Left cardiac atrium (tissue), 4 donors: ENCODE measurements at regions of chr15 and their contacts with region 1.

Region 1: DNA sequence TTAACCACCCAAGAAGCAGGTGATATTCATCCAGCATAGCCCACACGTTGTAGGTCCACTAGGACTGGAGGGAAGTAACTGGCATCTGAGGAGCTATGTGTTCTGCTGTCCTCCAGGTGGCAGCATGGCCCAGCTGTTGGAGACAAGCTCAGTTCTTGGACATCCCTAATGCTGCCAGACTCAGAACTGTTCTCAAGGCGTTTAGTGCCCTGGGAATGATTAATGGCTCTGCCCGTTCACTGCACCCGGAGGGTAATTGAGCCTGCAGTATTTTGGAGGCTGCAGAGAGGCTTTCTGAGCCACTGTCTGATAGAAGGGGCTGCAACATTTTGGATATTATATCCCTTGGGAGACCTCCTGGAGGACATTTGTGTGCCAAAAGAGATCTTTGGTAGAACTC is 521.2 kb upstream of the SEMA6D start:
- DNase-seq: peak; percentile 83
- ATAC-seq: peak; percentile 98 to 99

Region 2: GRCh38 chr15:47116698-47117097 is 79.4 kb before region 1 on chr15:
- intact Hi-C with region 1: no loop called
- DNase-seq: no peak
- ATAC-seq: no peak

Region 3: GRCh38 chr15:47409600-47409999 is 213.5 kb after region 1 on chr15:
- intact Hi-C with region 1: loop called in 1 of 2 experiments (anchors 10 kb)
- DNase-seq: no peak
- ATAC-seq: peak in 1 of 2 donors; percentile 23

Region 4: GRCh38 chr15:47466351-47466750 is 270.3 kb after region 1 on chr15:
- intact Hi-C with region 1: loop called in 1 of 2 experiments (anchors 10 kb)
- DNase-seq: no peak
- ATAC-seq: no peak

Region 5: GRCh38 chr15:47987908-47988532 is 792.0 kb after region 1 on chr15:
- intact Hi-C with region 1: loop called (anchors 2 to 5 kb)
- DNase-seq: no peak
- ATAC-seq: peak; percentile 93 to 94

Region 6: GRCh38 chr15:48250640-48251076 is 1054.6 kb after region 1 on chr15:
- intact Hi-C with region 1: loop called in 1 of 2 experiments (anchors 10 kb)
- DNase-seq: peak; percentile 60
- ATAC-seq: peak in 1 of 2 donors; percentile 45

Region 7: DNA sequence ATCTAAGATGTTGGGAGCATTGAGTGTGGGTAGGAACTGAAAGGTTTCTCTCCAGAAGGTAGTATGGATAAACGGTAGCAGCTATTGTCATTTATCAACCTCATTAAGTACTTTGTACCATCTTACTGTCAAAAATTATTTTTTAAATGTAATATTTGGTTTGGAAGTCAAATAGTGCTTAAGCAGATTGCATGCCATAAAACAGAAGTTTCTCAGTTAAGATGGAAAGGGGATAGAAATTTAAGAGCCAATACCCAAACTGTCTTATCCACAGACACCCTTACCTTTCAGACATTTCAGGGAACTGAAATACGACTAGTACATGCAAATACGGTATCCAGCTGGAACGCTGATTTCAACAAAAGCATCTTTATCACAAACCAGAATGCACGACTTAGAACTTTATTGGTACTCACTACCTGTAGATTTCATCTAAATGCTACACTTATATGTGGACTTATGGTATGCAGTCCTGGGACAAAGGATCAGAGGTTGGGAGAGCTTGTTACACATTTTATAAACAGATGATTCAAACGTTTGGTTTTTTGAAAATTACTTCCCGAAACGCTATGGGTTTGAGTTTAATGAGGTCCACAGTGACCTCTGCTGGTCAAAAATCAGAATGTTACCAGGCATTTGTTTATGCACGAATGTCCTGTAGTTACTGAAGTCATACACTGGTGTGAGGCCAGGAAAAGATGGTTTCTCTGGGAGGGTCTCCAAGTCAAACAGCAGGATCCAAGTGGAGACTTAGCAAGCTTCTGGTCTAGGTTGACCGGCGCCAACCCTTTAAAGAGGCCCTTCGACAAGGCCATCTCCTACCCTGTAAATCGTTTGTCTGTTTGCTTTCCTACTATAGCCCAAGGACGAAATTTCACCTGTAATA is 1089.5 kb after region 1 on chr15:
- intact Hi-C with region 1: loop called in 1 of 2 experiments (anchors 5 kb)
- DNase-seq: peak; percentile 58
- ATAC-seq: peak; percentile 68 to 85